HEK293 (cell line): ENCODE measurements at regions of chr11 and their contacts with region 1.

Region 1: DNA sequence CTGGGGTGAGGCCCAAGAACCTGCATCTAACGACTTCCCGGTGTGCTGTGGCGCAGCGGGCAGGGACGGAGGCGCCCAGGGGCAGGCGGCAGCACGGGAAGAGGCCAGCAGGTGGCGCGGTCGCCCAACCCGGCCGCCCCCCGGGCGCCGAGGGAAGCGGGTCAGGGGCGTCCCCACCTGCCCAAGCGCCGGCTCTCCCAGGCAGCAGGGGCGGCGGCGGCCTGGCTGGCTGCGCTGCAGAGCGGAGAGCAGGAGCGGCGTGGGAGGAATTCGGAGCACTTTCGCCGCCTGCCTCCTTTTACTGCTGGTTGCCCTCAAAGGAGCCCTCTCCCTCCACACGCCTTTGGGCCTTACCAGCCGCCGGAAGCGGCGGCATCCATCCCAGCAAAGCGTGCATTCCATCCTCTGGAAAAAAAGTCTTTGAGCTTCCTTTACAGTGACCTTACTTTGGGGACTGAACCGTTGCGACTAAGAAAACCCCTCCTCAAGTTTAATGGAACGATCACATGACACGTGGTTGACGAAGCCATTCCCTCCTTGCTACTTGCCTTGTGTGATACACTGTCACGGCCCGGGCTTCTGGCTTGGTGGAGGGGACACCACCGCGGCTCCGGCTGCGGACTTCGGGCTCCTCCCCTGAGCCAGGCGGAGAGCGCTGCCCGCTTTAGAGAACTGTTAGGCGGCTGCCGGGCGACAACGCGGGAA is 106.8 kb upstream of the CLMP start:
- H3K4me3 ChIP-seq: peak overlapping the region; percentile 10
- H3K27ac ChIP-seq: no peak overlapping the region
- H3K4me1 ChIP-seq: no peaks in the 10 kb centered on the region
- CTCF ChIP-seq: peak; percentile 21; the same call in 1 of the 2 replicates

Region 2: GRCh38 chr11:123357961-123358841 is 56.4 kb after region 1 on chr11:
- CTCF ChIA-PET with region 1: interaction called, 10 read pairs
- POLR2A ChIA-PET with region 1: no interaction called
- H3K4me3 ChIP-seq: peak overlapping the region; percentile 49
- H3K27ac ChIP-seq: no peak overlapping the region
- H3K4me1 ChIP-seq: no peaks in the 10 kb centered on the region
- CTCF ChIP-seq: peak; percentile 41; the same call in 1 of the 2 replicates